Lower leg skin (tissue), 4 donors: ENCODE measurements at regions of chr20 and their contacts with region 1.

Region 1: DNA sequence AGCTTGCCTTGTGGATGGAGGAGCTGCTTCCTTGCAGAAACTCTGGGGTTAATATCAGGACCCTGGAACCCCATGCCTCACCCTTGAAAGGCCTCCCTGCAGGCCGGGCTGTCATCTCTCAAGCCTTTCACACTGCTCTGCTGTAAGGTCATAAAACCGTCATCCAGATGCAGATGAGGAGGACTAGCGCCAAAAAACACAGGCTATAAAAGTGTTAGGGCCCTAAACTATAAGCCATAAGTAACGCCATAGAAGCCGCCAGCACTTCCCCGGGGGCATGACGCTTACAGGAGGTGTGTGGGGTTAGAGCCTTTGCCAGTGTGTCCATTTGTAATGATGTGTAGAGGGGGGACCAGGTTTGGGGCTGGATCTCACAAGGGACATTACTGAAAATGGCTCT is 47.6 kb downstream of the CDH4 start:
- DNase-seq: no peak
- H3K4me3 ChIP-seq: no peak overlapping the region
- CTCF ChIP-seq: no peak
- POLR2A ChIP-seq: no peak

Region 2: GRCh38 chr20:61786230-61786629 is 486.6 kb after region 1 on chr20:
- intact Hi-C with region 1: loop called (anchors 10 kb)
- DNase-seq: no peak
- H3K4me3 ChIP-seq: no peak overlapping the region
- CTCF ChIP-seq: no peak
- POLR2A ChIP-seq: no peak